Left ventricle myocardium inferior (tissue), 1 donor: ENCODE measurements at regions of chr9 and their contacts with region 1.

Region 1: GRCh38 chr9:33721674-33722358 is 73.5 kb upstream of the PRSS3 start:
- DNase-seq: peak; percentile 83
- H3K4me3 ChIP-seq: no peak overlapping the region
- H3K27ac ChIP-seq: no peak overlapping the region
- H3K4me1 ChIP-seq: peaks cover 3% of the 10 kb centered on the region
- H3K27me3 ChIP-seq: peaks cover 29% of the 10 kb centered on the region
- CTCF ChIP-seq: peak; percentile 100

Region 2: DNA sequence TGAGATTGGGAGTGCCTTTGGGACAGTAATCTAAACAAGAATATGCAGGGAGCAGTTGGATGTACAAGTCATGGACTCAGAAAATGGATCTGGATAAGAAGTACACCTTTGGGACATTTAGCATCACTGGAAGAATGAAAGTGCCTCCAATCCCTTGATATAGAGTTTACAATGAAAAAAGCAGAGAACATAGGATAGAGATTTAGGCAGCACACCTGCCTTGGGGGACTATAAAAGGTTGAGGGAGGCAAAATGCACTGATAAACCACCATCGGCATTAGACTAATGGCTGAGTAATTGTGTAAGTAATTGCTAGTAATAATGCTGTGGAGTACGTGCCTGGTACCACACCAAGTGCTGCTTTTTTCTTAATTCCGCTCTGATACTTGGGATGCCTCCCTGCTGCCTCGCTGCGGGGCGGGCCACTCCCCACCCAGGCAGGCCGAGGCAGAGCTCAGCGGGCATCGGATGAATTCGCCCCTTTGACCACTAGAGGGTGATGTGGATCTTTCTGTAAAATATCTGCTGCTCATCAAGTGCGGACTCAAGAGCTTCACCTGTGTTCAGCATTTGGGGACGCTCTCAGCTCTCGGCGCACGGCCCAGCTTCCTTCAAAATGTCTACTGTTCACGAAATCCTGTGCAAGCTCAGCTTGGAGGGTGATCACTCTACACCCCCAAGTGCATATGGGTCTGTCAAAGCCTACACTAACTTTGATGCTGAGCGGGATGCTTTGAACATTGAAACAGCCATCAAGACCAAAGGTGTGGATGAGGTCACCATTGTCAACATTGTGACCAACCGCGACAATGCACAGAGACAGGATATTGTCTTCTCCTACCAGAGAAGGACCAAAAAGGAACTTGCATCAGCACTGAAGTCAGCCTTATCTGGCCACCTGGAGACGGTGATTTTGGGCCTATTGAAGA is 97.9 kb before region 1 on chr9:
- intact Hi-C with region 1: loop called (anchors 5 kb)
- DNase-seq: peak; percentile 24
- H3K4me3 ChIP-seq: no peak overlapping the region
- H3K27ac ChIP-seq: no peak overlapping the region
- H3K4me1 ChIP-seq: no peaks in the 10 kb centered on the region
- H3K27me3 ChIP-seq: peaks cover 47% of the 10 kb centered on the region
- CTCF ChIP-seq: peak; percentile 87